CD14-positive monocyte (primary cell): ENCODE measurements at regions of chr12 and their contacts with region 1.

Region 1: DNA sequence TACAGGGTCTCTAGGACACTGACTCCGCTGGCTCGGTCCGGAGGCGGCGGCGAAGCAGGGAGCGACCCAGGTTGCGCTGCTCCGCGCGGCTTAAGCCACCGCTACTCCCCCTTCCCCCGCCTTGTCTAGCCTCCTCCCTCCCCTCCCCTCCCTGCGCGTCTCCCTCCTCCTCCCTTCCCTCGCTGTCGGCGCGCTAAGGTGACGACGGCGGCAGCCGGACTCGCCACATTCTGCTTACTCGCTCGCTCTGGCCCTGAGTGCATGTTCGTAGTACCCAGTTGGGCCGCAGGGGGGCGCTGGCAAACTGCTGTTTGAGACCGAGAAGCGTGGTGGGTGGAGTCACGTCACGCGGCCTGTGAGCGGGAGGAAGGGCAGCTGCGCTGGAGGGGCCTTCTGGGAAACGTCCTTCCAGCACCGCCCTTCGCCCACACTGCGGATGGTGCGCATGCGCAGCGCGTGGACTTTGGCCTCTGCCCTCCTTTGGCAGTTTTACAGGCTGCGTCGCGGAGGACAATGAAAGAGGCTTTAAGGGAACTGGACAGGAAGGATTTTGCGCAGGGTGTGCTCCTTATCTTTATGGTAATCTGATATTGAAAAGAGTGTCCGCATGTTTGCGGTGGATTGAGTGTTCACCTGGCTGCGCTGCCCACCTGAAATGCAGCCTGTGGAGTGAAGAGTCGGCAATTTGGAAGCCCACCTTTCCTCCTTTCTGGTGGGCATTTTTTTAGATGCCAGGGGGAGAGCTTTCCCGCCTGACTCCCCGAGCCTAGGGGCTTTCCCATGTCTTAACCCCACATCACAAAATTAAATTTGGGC is at the start of gene SCAF11:
- DNase-seq: peak; percentile 100
- H3K4me3 ChIP-seq: peak within 1 kb of the TSS; percentile 71 to 87 (median 83)
- H3K4me3 Mint-ChIP-seq: peak within 1 kb of the TSS; percentile 96 to 98
- H3K27ac ChIP-seq: peak within 1 kb of the TSS; percentile 96 to 99
- H3K27ac Mint-ChIP-seq: peak within 1 kb of the TSS; percentile 95 to 98 (median 97)
- H3K4me1 ChIP-seq: peaks cover 32 to 48% of the 10 kb centered on the region in 2 donors
- H3K4me1 Mint-ChIP-seq: peaks cover 39% of the 10 kb centered on the region
- H3K27me3 ChIP-seq: no peaks in the 10 kb centered on the region
- H3K27me3 Mint-ChIP-seq: peaks cover 0 to 1% (median 0%) of the 10 kb centered on the region in 3 donors
- CTCF ChIP-seq: peak; percentile 85
- polyA plus RNA-seq, gene SCAF11: 32.6 to 73.4 (median 56.1) TPM

Region 2: GRCh38 chr12:45728630-45729232 is 261.9 kb before region 1 on chr12:
- intact Hi-C with region 1: loop called in 1 of 2 experiments (anchors 5 kb)
- DNase-seq: peak; percentile 90 to 96 (median 93)
- H3K4me3 ChIP-seq: peak overlapping the region; percentile 65 to 98 (median 73)
- H3K4me3 Mint-ChIP-seq: peak overlapping the region; percentile 98 to 99
- H3K27ac ChIP-seq: peak overlapping the region; percentile 98
- H3K27ac Mint-ChIP-seq: peak overlapping the region; percentile 98 to 99 (median 98)
- H3K4me1 ChIP-seq: peaks cover 29 to 58% of the 10 kb centered on the region in 2 donors
- H3K4me1 Mint-ChIP-seq: peaks cover 39% of the 10 kb centered on the region
- H3K27me3 ChIP-seq: no peaks in the 10 kb centered on the region
- H3K27me3 Mint-ChIP-seq: no peaks in the 10 kb centered on the region
- CTCF ChIP-seq: peak; percentile 98

Region 3: DNA sequence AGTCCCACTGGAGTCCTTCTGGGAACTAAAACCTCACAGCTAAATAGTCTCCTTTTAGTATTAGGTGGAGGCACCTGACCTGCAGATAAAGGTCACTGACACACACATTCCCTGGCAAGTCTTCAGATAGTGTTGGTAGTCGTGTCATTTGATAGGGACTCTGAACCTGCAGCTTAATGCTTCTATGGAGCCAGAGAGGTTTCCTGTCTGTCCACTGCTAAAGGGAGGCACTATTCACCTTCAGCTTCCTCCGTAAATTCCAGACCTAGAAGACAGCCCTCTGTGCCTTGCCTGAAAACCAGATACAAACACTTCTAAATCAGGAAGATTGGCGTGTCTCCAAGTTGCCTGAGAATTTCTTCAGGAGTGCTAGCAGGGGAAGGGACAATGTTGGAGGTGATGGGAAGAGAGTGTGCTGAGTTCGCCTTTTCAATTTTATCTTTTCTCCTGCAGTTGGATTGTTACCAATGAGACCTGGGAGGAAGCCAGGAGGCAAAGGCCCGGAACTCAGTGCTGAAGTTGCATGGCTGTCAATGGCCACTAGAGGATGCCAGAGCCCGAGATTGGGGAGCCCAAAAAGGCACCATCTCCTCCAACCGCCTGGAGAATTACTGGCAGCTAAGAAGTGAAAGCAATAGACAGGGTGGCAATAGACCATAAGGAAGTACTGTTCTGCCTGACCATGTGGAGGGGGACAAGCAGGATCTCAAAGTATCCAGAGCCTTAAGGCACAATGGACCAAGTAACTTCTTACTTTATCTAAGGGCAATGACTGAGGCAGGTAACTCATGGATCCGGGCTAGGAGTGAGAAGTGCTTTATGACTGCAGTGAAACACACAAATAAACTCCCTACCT is 81.3 kb after region 1 on chr12:
- intact Hi-C with region 1: no loop called
- DNase-seq: peak; percentile 43 to 55 (median 47)
- H3K4me3 ChIP-seq: no peak overlapping the region
- H3K4me3 Mint-ChIP-seq: peak overlapping the region in 1 of 2 donors; percentile 31
- H3K27ac ChIP-seq: no peak overlapping the region
- H3K27ac Mint-ChIP-seq: no peak overlapping the region
- H3K4me1 ChIP-seq: no peaks in the 10 kb centered on the region
- H3K4me1 Mint-ChIP-seq: peaks cover 6% of the 10 kb centered on the region
- H3K27me3 ChIP-seq: no peaks in the 10 kb centered on the region
- H3K27me3 Mint-ChIP-seq: peaks cover 0 to 2% (median 2%) of the 10 kb centered on the region in 3 donors
- CTCF ChIP-seq: peak; percentile 93

Region 4: DNA sequence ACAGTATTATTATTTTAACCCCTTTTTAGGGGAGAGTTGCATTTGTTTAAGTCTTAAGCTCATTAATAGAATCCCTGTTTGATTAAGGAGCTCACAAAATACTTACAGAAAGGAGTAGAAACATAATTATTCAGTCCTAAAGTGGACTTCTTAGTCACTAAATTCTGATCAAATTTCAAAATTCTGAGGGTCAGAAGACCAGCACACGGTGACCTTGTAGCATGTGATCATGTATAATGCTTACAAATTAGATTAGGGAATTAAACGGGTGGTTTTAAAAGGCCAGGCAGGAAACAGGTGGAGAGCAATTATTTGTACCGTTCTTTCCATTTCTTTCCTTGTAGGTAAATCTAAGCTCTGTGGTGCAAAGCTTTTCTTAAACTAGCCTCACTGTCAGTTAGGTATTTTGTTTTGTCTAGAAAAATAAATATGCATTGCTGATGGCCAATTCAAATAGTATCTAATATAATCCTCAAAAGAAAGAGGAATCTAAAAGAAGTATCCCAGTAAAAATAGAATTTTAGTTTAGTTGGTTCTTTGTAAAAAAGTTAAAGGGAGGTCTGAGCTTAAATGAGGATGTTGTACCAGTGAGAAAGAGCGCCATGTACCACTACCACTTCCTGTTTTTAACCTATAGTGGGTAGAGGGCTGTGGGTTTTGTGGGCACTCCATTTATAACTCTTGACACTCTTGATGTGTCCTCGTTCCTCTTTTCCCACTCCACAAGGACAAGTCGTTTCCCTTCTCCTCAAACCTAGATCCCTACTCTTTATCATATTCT is 227.1 kb after region 1 on chr12:
- intact Hi-C with region 1: loop called in 1 of 2 experiments (anchors 10 kb)
- DNase-seq: peak; percentile 76 to 91 (median 90)
- H3K4me3 ChIP-seq: peak overlapping the region in 1 of 3 experiments; percentile 27
- H3K4me3 Mint-ChIP-seq: peak overlapping the region in 1 of 2 donors; percentile 78
- H3K27ac ChIP-seq: peak overlapping the region in 1 of 2 donors; percentile 63
- H3K27ac Mint-ChIP-seq: peak overlapping the region; percentile 23 to 81 (median 56)
- H3K4me1 ChIP-seq: peaks cover 81 to 82% of the 10 kb centered on the region in 2 donors
- H3K4me1 Mint-ChIP-seq: peaks cover 78% of the 10 kb centered on the region
- H3K27me3 ChIP-seq: no peaks in the 10 kb centered on the region
- H3K27me3 Mint-ChIP-seq: peaks cover 16 to 26% (median 21%) of the 10 kb centered on the region in 3 donors
- CTCF ChIP-seq: no peak

Region 5: GRCh38 chr12:46377678-46378077 is 387.0 kb after region 1 on chr12:
- intact Hi-C with region 1: loop called (anchors 5 kb)
- DNase-seq: no peak
- H3K4me3 ChIP-seq: no peak overlapping the region
- H3K4me3 Mint-ChIP-seq: no peak overlapping the region
- H3K27ac ChIP-seq: no peak overlapping the region
- H3K27ac Mint-ChIP-seq: no peak overlapping the region
- H3K4me1 ChIP-seq: peaks cover 14 to 19% of the 10 kb centered on the region in 2 donors
- H3K4me1 Mint-ChIP-seq: peaks cover 25% of the 10 kb centered on the region
- H3K27me3 ChIP-seq: no peaks in the 10 kb centered on the region
- H3K27me3 Mint-ChIP-seq: peaks cover 0 to 3% (median 1%) of the 10 kb centered on the region in 3 donors
- CTCF ChIP-seq: no peak

Region 6: GRCh38 chr12:46661110-46661845 is 670.6 kb after region 1 on chr12:
- intact Hi-C with region 1: loop called in 1 of 2 experiments (anchors 10 kb)
- DNase-seq: peak; percentile 25 to 57 (median 46)
- H3K4me3 ChIP-seq: peak overlapping the region in 2 of 3 experiments; percentile 16 to 45
- H3K4me3 Mint-ChIP-seq: peak overlapping the region in 1 of 2 donors; percentile 54
- H3K27ac ChIP-seq: peak overlapping the region in 1 of 2 donors; percentile 78
- H3K27ac Mint-ChIP-seq: peak overlapping the region; percentile 68 to 91 (median 83)
- H3K4me1 ChIP-seq: peaks cover 40 to 43% of the 10 kb centered on the region in 2 donors
- H3K4me1 Mint-ChIP-seq: peaks cover 44% of the 10 kb centered on the region
- H3K27me3 ChIP-seq: no peaks in the 10 kb centered on the region
- H3K27me3 Mint-ChIP-seq: no peaks in the 10 kb centered on the region
- CTCF ChIP-seq: peak; percentile 69